CD8-positive, alpha-beta T cell (primary cell): ENCODE measurements at regions of chrX and their contacts with region 1.

Region 1: GRCh38 chrX:132022967-132023895 is at the start of gene STK26:
- DNase-seq: peak; percentile 51 to 88 (median 75)
- ATAC-seq: peak; percentile 87
- H3K4me3 ChIP-seq: peak within 1 kb of the TSS; percentile 84 to 87
- H3K4me3 Mint-ChIP-seq: peak within 1 kb of the TSS; percentile 93
- H3K27ac ChIP-seq: peak within 1 kb of the TSS; percentile 79 to 80
- H3K27ac Mint-ChIP-seq: peak within 1 kb of the TSS; percentile 93
- H3K4me1 ChIP-seq: peaks cover 35% of the 10 kb centered on the region
- H3K4me1 Mint-ChIP-seq: peaks cover 40% of the 10 kb centered on the region
- H3K27me3 ChIP-seq: no peaks in the 10 kb centered on the region
- H3K27me3 Mint-ChIP-seq: no peaks in the 10 kb centered on the region
- CTCF ChIP-seq: no peak
- total RNA-seq, gene STK26: 33.8 to 34.1 TPM

Region 2: GRCh38 chrX:131762799-131763234 is 260.4 kb before region 1 on chrX:
- CTCF ChIA-PET with region 1: no interaction called
- POLR2A ChIA-PET with region 1: no interaction called
- intact Hi-C with region 1: no loop called
- DNase-seq: peak in 2 of 9 experiments; percentile 61 to 64
- ATAC-seq: no peak
- H3K4me3 ChIP-seq: no peak overlapping the region
- H3K4me3 Mint-ChIP-seq: no peak overlapping the region
- H3K27ac ChIP-seq: no peak overlapping the region
- H3K27ac Mint-ChIP-seq: no peak overlapping the region
- H3K4me1 ChIP-seq: no peaks in the 10 kb centered on the region
- H3K4me1 Mint-ChIP-seq: no peaks in the 10 kb centered on the region
- H3K27me3 ChIP-seq: no peaks in the 10 kb centered on the region
- H3K27me3 Mint-ChIP-seq: no peaks in the 10 kb centered on the region
- CTCF ChIP-seq: no peak

Region 3: GRCh38 chrX:131987252-131987651 is 36.0 kb before region 1 on chrX:
- CTCF ChIA-PET with region 1: no interaction called
- POLR2A ChIA-PET with region 1: interaction called, 7 read pairs
- intact Hi-C with region 1: loop called (anchors 1 to 5 kb)
- DNase-seq: peak in 6 of 9 experiments; percentile 2 to 82 (median 34)
- ATAC-seq: peak; percentile 96
- H3K4me3 ChIP-seq: peak overlapping the region in 1 of 2 experiments; percentile 21
- H3K4me3 Mint-ChIP-seq: peak overlapping the region; percentile 45
- H3K27ac ChIP-seq: peak overlapping the region; percentile 54 to 87
- H3K27ac Mint-ChIP-seq: peak overlapping the region; percentile 97
- H3K4me1 ChIP-seq: peaks cover 56% of the 10 kb centered on the region
- H3K4me1 Mint-ChIP-seq: peaks cover 62% of the 10 kb centered on the region
- H3K27me3 ChIP-seq: no peaks in the 10 kb centered on the region
- H3K27me3 Mint-ChIP-seq: no peaks in the 10 kb centered on the region
- CTCF ChIP-seq: no peak

Region 4: DNA sequence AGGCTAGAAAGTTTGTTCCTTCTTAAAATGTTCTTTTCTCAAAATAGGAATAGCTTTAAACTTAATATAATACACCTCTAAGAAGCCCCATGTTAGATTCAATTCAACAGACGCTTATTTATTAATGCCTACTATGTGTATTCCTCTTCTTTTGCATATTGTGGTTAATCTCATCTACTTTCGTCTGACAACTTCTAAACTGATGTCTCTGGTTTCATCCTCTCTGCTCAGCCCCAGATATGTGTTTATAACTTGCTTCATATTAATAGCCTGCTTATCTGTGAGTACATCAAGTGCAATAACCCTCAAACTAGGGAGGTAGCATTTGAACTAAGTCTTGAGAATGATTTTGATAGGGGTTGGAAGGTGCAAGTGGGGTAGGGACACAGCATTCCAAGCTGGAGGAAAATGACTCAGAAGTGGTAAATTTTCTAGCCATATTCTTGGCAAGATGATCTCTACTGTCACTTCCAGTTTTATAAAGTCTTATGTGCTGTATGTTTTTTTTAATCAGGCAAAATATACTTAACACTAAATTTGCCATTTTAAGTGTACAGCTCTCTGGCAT is 36.8 kb after region 1 on chrX:
- CTCF ChIA-PET with region 1: no interaction called
- POLR2A ChIA-PET with region 1: no interaction called
- intact Hi-C with region 1: loop called in 1 of 2 experiments (anchors 5 kb)
- DNase-seq: no peak
- ATAC-seq: no peak
- H3K4me3 ChIP-seq: no peak overlapping the region
- H3K4me3 Mint-ChIP-seq: no peak overlapping the region
- H3K27ac ChIP-seq: no peak overlapping the region
- H3K27ac Mint-ChIP-seq: no peak overlapping the region
- H3K4me1 ChIP-seq: peaks cover 4% of the 10 kb centered on the region
- H3K4me1 Mint-ChIP-seq: peaks cover 33% of the 10 kb centered on the region
- H3K27me3 ChIP-seq: no peaks in the 10 kb centered on the region
- H3K27me3 Mint-ChIP-seq: no peaks in the 10 kb centered on the region
- CTCF ChIP-seq: no peak

Region 5: DNA sequence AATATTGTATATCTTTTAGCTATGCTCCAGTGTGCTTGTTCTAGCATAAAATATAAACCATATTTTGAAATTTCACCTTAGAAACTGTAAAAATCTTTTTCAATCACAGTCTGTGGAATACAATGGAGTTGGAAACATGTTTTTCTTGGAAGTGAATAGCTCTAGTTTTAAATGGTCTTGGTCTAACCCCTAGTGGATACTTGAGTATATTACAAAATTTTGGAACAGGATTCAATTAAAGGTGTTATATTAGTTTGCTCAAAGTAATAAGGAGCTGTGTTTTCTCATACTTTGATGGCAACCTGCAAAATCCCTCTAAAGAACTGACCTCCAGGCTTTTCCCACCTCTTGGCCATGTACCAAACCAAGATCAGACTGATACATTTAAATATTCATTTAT is 48.0 kb after region 1 on chrX:
- CTCF ChIA-PET with region 1: interaction called, 3 read pairs
- POLR2A ChIA-PET with region 1: interaction called, 3 read pairs
- intact Hi-C with region 1: loop called in 1 of 2 experiments (anchors 2 kb)
- DNase-seq: peak in 2 of 9 experiments; percentile 3 to 17
- ATAC-seq: no peak
- H3K4me3 ChIP-seq: no peak overlapping the region
- H3K4me3 Mint-ChIP-seq: no peak overlapping the region
- H3K27ac ChIP-seq: no peak overlapping the region
- H3K27ac Mint-ChIP-seq: no peak overlapping the region
- H3K4me1 ChIP-seq: no peaks in the 10 kb centered on the region
- H3K4me1 Mint-ChIP-seq: peaks cover under 1% of the 10 kb centered on the region
- H3K27me3 ChIP-seq: no peaks in the 10 kb centered on the region
- H3K27me3 Mint-ChIP-seq: no peaks in the 10 kb centered on the region
- CTCF ChIP-seq: peak; percentile 34

Region 6: DNA sequence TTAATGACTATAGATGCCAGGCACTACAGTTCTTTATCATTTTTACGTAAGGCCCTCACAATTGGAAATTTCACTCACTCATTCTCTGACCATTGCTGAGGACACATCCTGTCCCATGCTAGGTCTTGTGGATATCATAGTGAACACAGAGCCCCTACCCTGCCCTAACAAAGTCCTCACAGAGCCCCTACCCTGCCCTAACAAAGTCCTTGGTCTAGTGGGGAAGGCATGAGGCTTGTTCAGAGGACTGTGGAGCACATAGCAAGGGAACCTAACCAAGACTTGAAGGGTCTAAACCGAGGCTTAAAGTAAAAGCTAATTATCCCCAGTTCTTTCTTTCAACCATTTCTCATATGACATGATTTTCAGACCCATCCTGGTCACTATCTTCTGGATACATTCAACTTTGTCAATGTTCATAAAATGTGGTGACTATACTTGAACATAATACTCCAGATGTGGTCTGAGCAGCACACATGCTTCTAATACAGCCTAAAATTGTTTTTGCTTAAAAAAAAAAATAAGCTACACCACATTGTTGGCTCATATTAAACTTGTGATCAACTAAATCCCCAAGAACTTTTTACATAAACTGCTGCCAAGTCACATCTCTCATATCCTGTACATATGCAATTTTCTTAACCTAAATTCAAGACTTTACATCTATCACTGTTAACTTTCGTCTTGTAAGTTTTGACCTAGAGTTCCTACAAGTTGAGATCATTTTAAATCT is 1885.2 kb after region 1 on chrX:
- CTCF ChIA-PET with region 1: no interaction called
- POLR2A ChIA-PET with region 1: no interaction called
- intact Hi-C with region 1: no loop called
- DNase-seq: no peak
- ATAC-seq: no peak
- H3K4me3 ChIP-seq: no peak overlapping the region
- H3K4me3 Mint-ChIP-seq: no peak overlapping the region
- H3K27ac ChIP-seq: no peak overlapping the region
- H3K27ac Mint-ChIP-seq: no peak overlapping the region
- H3K4me1 ChIP-seq: no peaks in the 10 kb centered on the region
- H3K4me1 Mint-ChIP-seq: no peaks in the 10 kb centered on the region
- H3K27me3 ChIP-seq: no peaks in the 10 kb centered on the region
- H3K27me3 Mint-ChIP-seq: no peaks in the 10 kb centered on the region
- CTCF ChIP-seq: no peak